ENCODE measurements at regions of chr6 and their contacts with region 1.

Region 1: GRCh38 chr6:128078276-128078675 is 177.4 kb upstream of the THEMIS start:
- DNase-seq: no peak
- ATAC-seq: no peak
- H3K4me3 ChIP-seq: no peak overlapping the region
- H3K4me3 Mint-ChIP-seq: no peak overlapping the region
- H3K27ac ChIP-seq: no peak overlapping the region
- H3K27ac Mint-ChIP-seq: no peak overlapping the region
- H3K4me1 ChIP-seq: no peaks in the 10 kb centered on the region
- H3K4me1 Mint-ChIP-seq: no peaks in the 10 kb centered on the region
- H3K27me3 ChIP-seq: no peaks in the 10 kb centered on the region
- H3K27me3 Mint-ChIP-seq: no peaks in the 10 kb centered on the region
- CTCF ChIP-seq: no peak

Region 2: GRCh38 chr6:126842769-126843168 is 1235.5 kb before region 1 on chr6:
- CTCF ChIA-PET with region 1: no interaction called
- POLR2A ChIA-PET with region 1: no interaction called
- intact Hi-C with region 1: no loop called
- DNase-seq: no peak
- ATAC-seq: no peak
- H3K4me3 ChIP-seq: no peak overlapping the region
- H3K4me3 Mint-ChIP-seq: no peak overlapping the region
- H3K27ac ChIP-seq: no peak overlapping the region
- H3K27ac Mint-ChIP-seq: no peak overlapping the region
- H3K4me1 ChIP-seq: no peaks in the 10 kb centered on the region
- H3K4me1 Mint-ChIP-seq: no peaks in the 10 kb centered on the region
- H3K27me3 ChIP-seq: no peaks in the 10 kb centered on the region
- H3K27me3 Mint-ChIP-seq: no peaks in the 10 kb centered on the region
- CTCF ChIP-seq: no peak

Region 3: DNA sequence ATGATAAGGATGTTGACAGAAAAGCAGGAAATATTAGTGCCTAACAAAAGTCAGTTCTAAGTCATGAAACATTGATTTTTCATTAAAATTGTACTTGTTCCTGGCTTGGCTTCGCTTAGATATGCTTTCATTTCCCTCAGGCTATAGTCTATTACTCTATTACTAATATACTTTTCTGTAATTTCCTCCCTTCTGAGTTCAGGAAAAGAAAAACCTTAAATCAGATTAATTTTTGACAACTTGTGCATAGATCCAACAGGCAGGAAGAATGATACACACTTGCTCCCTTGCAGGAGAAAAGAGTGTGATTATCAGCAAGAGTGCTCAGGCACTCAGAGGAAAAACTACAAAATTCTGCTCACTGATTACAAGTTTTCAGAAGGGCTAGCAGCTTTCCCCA is 32.2 kb before region 1 on chr6:
- CTCF ChIA-PET with region 1: no interaction called
- POLR2A ChIA-PET with region 1: no interaction called
- intact Hi-C with region 1: loop called in 1 of 2 experiments (anchors 5 kb)
- DNase-seq: no peak
- ATAC-seq: no peak
- H3K4me3 ChIP-seq: no peak overlapping the region
- H3K4me3 Mint-ChIP-seq: no peak overlapping the region
- H3K27ac ChIP-seq: no peak overlapping the region
- H3K27ac Mint-ChIP-seq: no peak overlapping the region
- H3K4me1 ChIP-seq: no peaks in the 10 kb centered on the region
- H3K4me1 Mint-ChIP-seq: peaks cover 18% of the 10 kb centered on the region
- H3K27me3 ChIP-seq: no peaks in the 10 kb centered on the region
- H3K27me3 Mint-ChIP-seq: no peaks in the 10 kb centered on the region
- CTCF ChIP-seq: no peak

Region 4: DNA sequence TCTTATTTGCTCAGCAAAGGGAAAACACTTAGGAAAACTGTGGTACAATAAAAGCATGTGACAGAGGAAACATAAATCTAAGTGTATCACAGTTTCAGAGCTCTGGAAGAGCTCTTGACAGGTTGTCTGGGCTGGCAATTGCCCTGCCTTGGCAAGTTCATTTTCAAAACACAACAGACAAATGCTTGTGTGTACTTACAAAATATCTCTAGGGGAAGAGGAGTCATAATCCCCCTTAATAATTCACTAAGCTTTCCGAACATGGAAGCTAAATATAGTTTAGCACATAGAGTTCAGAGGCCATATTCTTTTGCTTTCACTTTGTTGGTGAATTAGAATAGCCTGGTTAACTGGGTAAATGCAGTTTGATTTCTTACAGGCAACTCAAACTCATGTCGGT is 34.2 kb after region 1 on chr6:
- CTCF ChIA-PET with region 1: no interaction called
- POLR2A ChIA-PET with region 1: no interaction called
- intact Hi-C with region 1: loop called in 1 of 2 experiments (anchors 5 kb)
- DNase-seq: peak in 1 of 9 experiments; percentile 24
- ATAC-seq: peak; percentile 44
- H3K4me3 ChIP-seq: peak overlapping the region; percentile 32 to 44
- H3K4me3 Mint-ChIP-seq: peak overlapping the region; percentile 76
- H3K27ac ChIP-seq: peak overlapping the region in 1 of 2 experiments; percentile 11
- H3K27ac Mint-ChIP-seq: peak overlapping the region; percentile 80
- H3K4me1 ChIP-seq: no peaks in the 10 kb centered on the region
- H3K4me1 Mint-ChIP-seq: peaks cover 20% of the 10 kb centered on the region
- H3K27me3 ChIP-seq: no peaks in the 10 kb centered on the region
- H3K27me3 Mint-ChIP-seq: no peaks in the 10 kb centered on the region
- CTCF ChIP-seq: no peak

Region 5: DNA sequence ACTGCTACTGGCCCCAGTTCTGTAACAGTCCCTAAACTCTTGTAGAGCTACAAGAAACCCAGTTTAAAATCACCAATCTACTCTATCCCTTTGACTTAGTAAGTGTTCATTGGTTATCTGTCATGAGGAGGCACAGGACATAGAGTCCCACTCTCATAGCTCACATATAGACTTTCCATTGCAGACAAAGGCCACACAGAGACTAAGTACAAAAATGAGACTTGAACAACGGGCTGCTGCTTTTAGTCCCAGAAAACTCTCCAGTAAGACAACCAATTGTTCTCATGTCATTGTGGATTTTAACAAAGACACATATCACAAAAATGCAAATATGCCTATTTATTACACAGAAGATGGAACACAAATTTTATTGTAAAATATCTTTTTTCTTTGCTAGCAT is 244.7 kb after region 1 on chr6:
- CTCF ChIA-PET with region 1: no interaction called
- POLR2A ChIA-PET with region 1: no interaction called
- intact Hi-C with region 1: no loop called
- DNase-seq: no peak
- ATAC-seq: no peak
- H3K4me3 ChIP-seq: no peak overlapping the region
- H3K4me3 Mint-ChIP-seq: no peak overlapping the region
- H3K27ac ChIP-seq: no peak overlapping the region
- H3K27ac Mint-ChIP-seq: no peak overlapping the region
- H3K4me1 ChIP-seq: no peaks in the 10 kb centered on the region
- H3K4me1 Mint-ChIP-seq: no peaks in the 10 kb centered on the region
- H3K27me3 ChIP-seq: no peaks in the 10 kb centered on the region
- H3K27me3 Mint-ChIP-seq: no peaks in the 10 kb centered on the region
- CTCF ChIP-seq: no peak

Measured in CD8-positive, alpha-beta T cell (primary cell).